H1 (cell line): ENCODE measurements at regions of chr12 and their contacts with region 1.

Region 1: GRCh38 chr12:52884526-52885293 is 20.2 kb downstream of the KRT8 start:
- DNase-seq: peak in 1 of 2 experiments; percentile 98
- H3K4me3 ChIP-seq: no peak overlapping the region
- H3K27ac ChIP-seq: no peak overlapping the region
- H3K4me1 ChIP-seq: no peaks in the 10 kb centered on the region
- H3K27me3 ChIP-seq: no peaks in the 10 kb centered on the region; a peak in 1 of 7 replicates
- CTCF ChIP-seq: peak; percentile 83 to 98 (median 88)
- EP300 ChIP-seq: no peak
- POLR2A ChIP-seq: no peak
- RAD21 ChIP-seq: peak; percentile 99

Region 2: DNA sequence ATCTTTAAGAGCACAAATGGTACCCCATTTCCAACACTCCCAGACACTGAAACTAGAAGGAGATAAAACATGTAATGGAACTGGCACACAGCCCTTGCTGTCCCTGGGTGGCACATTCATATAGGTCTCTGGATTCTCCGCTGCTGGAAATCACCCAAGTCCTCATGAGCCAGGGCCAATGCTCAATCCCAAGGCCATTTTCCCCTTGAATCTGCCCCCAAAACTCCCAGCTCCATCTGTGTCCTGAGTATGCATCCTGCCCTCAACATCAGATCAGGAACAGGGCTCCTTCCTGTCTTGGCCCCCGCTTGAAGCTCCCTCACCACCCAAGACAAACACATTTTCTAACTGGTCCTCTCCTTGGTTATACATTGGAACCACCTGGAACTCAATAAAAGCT is 132.2 kb before region 1 on chr12:
- CTCF ChIA-PET with region 1: no interaction called
- POLR2A ChIA-PET with region 1: no interaction called
- DNase-seq: no peak
- H3K4me3 ChIP-seq: no peak overlapping the region
- H3K27ac ChIP-seq: no peak overlapping the region
- H3K4me1 ChIP-seq: no peaks in the 10 kb centered on the region
- H3K27me3 ChIP-seq: peaks cover 0 to 3% (median 0%) of the 10 kb centered on the region in 4 experiments; a peak in 1 of 7 replicates
- CTCF ChIP-seq: no peak
- EP300 ChIP-seq: no peak
- POLR2A ChIP-seq: no peak
- RAD21 ChIP-seq: no peak

Region 3: GRCh38 chr12:52895061-52895887 is 10.6 kb after region 1 on chr12:
- CTCF ChIA-PET with region 1: interaction called, 351 read pairs
- POLR2A ChIA-PET with region 1: interaction called, 12 read pairs
- DNase-seq: no peak
- H3K4me3 ChIP-seq: no peak overlapping the region
- H3K27ac ChIP-seq: no peak overlapping the region
- H3K4me1 ChIP-seq: no peaks in the 10 kb centered on the region
- H3K27me3 ChIP-seq: no peaks in the 10 kb centered on the region
- CTCF ChIP-seq: no peak
- EP300 ChIP-seq: no peak
- POLR2A ChIP-seq: no peak
- RAD21 ChIP-seq: no peak

Region 4: DNA sequence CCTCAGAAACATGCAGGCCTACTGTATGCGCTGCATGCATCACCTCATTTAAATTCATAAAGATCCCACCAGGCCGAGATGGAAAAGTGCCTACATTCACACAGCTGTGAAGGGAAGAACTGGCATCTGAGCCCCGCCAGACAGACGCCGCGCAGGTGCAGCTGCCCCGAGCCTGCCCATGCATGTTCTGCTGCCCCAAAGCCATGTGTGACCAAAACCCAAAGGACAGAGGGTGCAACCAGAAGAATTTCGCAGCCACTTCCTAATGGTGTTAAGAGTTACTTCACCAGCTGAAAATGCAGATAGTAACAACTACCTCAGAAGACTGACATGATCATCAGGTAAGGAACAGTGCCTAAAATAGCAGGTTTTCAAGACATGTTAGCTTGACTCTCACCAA is 33.6 kb after region 1 on chr12:
- CTCF ChIA-PET with region 1: interaction called, 37 read pairs
- POLR2A ChIA-PET with region 1: interaction called, 3 read pairs
- DNase-seq: no peak
- H3K4me3 ChIP-seq: no peak overlapping the region
- H3K27ac ChIP-seq: no peak overlapping the region
- H3K4me1 ChIP-seq: peaks cover 0 to 3% (median 0%) of the 10 kb centered on the region in 4 experiments; a peak in 1 of 7 replicates
- H3K27me3 ChIP-seq: no peaks in the 10 kb centered on the region
- CTCF ChIP-seq: no peak
- EP300 ChIP-seq: no peak
- POLR2A ChIP-seq: no peak
- RAD21 ChIP-seq: no peak

Region 5: DNA sequence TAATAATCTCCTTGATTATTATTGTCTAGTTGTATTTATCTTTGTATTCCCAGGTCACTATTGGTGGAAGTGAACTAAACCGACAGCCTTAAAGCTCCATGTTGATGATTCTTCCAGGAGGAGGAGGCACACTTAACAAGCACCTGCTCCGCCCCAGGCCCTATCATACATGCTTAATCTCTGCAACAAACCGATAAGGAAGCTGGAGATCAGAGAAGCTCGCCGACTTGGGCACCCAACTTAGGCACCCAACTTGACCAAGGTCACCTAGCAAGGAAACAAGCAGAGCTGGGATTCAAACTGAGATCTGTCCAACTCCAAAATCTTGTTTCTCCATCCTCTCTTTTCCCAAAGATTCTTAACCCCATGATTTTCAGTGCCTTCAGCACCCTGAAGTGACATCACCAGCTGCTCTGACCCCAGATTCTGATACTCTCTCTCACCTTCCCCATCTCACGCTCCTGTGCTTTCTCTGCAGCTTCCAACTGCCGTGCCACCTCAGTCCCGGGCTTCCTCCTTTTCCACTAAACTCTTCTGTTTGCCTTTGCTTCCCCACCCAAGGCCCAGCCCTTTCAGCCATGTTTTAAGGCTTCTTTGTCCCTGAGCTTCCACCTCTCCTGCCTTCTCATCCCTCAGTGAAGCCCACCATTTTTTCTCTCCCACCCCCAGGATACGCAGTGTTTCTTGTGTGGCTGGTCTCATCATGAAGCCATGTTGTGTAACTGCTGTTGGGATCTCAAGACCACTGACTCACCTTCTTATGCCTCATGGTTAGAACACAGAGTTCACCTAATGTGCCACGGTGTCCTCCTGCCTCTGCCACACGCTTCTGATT is 57.6 kb after region 1 on chr12:
- CTCF ChIA-PET with region 1: interaction called, 35 read pairs
- POLR2A ChIA-PET with region 1: interaction called, 8 read pairs
- DNase-seq: no peak
- H3K4me3 ChIP-seq: no peak overlapping the region
- H3K27ac ChIP-seq: no peak overlapping the region
- H3K4me1 ChIP-seq: peaks cover 12 to 30% (median 23%) of the 10 kb centered on the region in 4 experiments
- H3K27me3 ChIP-seq: no peaks in the 10 kb centered on the region
- CTCF ChIP-seq: no peak
- EP300 ChIP-seq: no peak
- POLR2A ChIP-seq: no peak
- RAD21 ChIP-seq: no peak

Region 6: GRCh38 chr12:52956987-52957386 is 72.3 kb after region 1 on chr12:
- CTCF ChIA-PET with region 1: interaction called, 63 read pairs
- POLR2A ChIA-PET with region 1: interaction called, 3 read pairs
- DNase-seq: no peak
- H3K4me3 ChIP-seq: no peak overlapping the region
- H3K27ac ChIP-seq: no peak overlapping the region
- H3K4me1 ChIP-seq: no peaks in the 10 kb centered on the region; a peak in 1 of 7 replicates
- H3K27me3 ChIP-seq: no peaks in the 10 kb centered on the region
- CTCF ChIP-seq: no peak
- EP300 ChIP-seq: no peak
- POLR2A ChIP-seq: no peak
- RAD21 ChIP-seq: no peak

Region 7: DNA sequence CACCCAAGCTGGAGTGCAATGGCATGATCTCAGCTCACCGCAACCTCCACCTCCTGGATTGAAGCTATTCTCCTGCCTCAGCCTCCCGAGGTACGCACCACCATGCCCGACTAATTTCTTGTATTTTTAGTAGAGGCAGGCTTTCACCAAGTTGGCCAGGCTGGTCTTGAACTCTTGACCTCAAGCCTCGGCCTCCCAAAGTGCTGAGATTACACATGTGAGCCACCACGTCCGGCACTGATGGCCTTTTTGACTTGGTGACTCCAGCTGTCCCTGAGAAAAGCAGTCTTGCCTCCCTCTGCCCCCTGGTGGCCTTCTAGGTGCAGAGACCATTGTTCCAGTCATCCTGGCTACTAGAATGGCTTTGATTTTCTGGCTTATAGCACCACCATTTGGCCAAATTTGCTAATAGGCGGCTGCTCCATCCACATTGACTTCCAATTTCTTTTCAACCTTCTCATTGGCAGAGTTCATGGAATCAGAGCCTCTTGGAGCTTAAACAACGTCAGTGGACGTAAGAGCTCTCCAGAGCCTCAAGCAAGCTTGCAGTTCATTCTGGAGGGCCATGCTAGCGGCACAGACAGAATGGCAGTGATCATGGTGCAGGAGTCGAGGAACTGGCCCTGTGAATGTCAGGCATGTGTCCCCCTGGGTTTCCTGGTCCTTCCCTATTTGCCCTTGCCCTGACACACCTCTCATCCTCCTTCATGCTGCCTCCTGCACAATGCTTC is 96.1 kb after region 1 on chr12:
- CTCF ChIA-PET with region 1: interaction called, 1,250 read pairs
- POLR2A ChIA-PET with region 1: interaction called, 12 read pairs
- DNase-seq: peak; percentile 84 to 88
- H3K4me3 ChIP-seq: no peak overlapping the region
- H3K27ac ChIP-seq: no peak overlapping the region
- H3K4me1 ChIP-seq: peaks cover 0 to 10% (median 0%) of the 10 kb centered on the region in 4 experiments; a peak in 1 of 7 replicates
- H3K27me3 ChIP-seq: no peaks in the 10 kb centered on the region
- CTCF ChIP-seq: peak; percentile 92 to 100 (median 100)
- EP300 ChIP-seq: no peak
- POLR2A ChIP-seq: no peak
- RAD21 ChIP-seq: peak; percentile 100

Region 8: GRCh38 chr12:53074283-53074998 is 189.7 kb after region 1 on chr12:
- CTCF ChIA-PET with region 1: no interaction called
- POLR2A ChIA-PET with region 1: no interaction called
- DNase-seq: no peak
- H3K4me3 ChIP-seq: no peak overlapping the region
- H3K27ac ChIP-seq: no peak overlapping the region
- H3K4me1 ChIP-seq: peaks cover 3 to 13% (median 5%) of the 10 kb centered on the region in 4 experiments; a peak in 6 of 7 replicates
- H3K27me3 ChIP-seq: peaks cover 0 to 2% (median 0%) of the 10 kb centered on the region in 4 experiments; a peak in 1 of 7 replicates
- CTCF ChIP-seq: no peak
- EP300 ChIP-seq: no peak
- POLR2A ChIP-seq: no peak
- RAD21 ChIP-seq: no peak

Region 9: DNA sequence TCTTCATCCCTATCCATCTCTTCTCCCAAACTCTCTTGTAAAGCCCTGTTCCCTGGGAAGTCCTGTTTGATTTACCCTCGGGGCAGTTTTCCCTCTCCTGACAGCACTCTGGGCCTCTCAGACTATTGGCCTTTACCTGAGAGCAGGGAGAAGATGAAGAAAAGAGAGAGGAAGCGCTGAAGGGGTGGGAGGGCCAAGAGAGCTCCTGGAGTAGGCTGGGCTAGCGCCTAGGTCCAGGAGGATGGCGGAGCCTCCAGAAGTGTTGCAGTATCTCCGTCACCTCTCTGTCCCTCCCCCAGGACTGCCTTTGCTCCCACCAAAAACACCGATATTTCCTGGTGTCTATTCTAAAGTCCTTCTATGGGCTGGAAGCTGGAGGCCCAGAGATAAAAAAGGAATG is 207.0 kb after region 1 on chr12:
- CTCF ChIA-PET with region 1: no interaction called
- POLR2A ChIA-PET with region 1: no interaction called
- DNase-seq: no peak
- H3K4me3 ChIP-seq: no peak overlapping the region
- H3K27ac ChIP-seq: no peak overlapping the region
- H3K4me1 ChIP-seq: peaks cover 0 to 8% (median 0%) of the 10 kb centered on the region in 4 experiments; a peak in 4 of 7 replicates
- H3K27me3 ChIP-seq: peaks cover 0 to 8% (median 2%) of the 10 kb centered on the region in 4 experiments; a peak in 5 of 7 replicates
- CTCF ChIP-seq: no peak
- EP300 ChIP-seq: no peak
- POLR2A ChIP-seq: no peak
- RAD21 ChIP-seq: no peak

Region 10: DNA sequence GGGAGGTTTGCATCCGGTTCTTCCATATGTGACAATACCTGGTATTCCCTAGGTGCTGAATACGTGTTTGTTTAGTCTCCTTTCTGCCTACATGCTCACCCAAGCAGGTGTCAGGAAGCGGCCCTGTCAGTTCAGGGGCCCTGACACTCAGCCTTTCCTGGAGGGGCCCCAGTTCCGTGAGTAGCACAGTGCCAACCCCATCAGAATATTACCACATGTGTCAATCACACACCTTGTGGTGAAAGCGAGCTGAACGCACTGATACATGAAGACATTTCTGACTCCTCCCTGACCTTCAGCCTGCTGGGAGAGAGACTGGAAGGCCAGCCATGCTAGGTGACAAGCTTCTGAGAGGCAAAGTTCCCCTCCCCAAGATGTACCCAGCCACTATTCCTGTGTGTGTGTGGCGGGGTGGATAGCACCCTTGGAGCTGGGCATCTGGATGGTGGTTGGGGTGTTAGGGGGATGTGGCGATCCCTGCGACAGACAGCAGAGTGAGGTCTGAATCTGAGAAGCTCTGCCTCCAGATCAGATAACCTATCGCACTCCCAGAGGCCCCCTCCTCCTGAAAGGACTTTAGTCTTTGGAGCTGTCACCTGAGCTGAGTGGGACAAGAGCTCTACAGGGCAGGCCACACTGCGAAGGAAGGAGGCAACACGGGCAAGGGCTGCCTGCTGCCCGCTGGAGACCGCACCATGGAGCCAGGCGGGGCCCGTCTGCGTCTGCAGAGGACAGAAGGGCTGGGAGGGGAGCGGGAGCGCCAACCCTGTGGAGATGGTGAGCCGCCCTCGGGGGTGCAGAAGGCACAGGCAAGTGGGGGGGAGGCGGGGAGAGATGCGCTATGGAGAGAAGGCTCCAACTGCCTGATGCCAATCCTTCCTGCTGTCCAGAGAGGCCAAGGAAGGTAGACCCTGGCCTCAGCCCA is 218.4 kb after region 1 on chr12 and contains the start of gene SOAT2:
- CTCF ChIA-PET with region 1: no interaction called
- POLR2A ChIA-PET with region 1: no interaction called
- DNase-seq: no peak
- H3K4me3 ChIP-seq: no peak within 1 kb of the TSS
- H3K27ac ChIP-seq: no peak within 1 kb of the TSS
- H3K4me1 ChIP-seq: peaks cover 6 to 12% (median 8%) of the 10 kb centered on the region in 4 experiments; a peak in 6 of 7 replicates
- H3K27me3 ChIP-seq: peaks cover 0 to 13% (median 9%) of the 10 kb centered on the region in 4 experiments; a peak in 5 of 7 replicates
- CTCF ChIP-seq: no peak
- EP300 ChIP-seq: no peak
- POLR2A ChIP-seq: no peak
- RAD21 ChIP-seq: no peak
- total RNA-seq, gene SOAT2: not detected in 2 replicates